ENCODE measurements at regions of chr1 and their contacts with region 1.

Region 1: DNA sequence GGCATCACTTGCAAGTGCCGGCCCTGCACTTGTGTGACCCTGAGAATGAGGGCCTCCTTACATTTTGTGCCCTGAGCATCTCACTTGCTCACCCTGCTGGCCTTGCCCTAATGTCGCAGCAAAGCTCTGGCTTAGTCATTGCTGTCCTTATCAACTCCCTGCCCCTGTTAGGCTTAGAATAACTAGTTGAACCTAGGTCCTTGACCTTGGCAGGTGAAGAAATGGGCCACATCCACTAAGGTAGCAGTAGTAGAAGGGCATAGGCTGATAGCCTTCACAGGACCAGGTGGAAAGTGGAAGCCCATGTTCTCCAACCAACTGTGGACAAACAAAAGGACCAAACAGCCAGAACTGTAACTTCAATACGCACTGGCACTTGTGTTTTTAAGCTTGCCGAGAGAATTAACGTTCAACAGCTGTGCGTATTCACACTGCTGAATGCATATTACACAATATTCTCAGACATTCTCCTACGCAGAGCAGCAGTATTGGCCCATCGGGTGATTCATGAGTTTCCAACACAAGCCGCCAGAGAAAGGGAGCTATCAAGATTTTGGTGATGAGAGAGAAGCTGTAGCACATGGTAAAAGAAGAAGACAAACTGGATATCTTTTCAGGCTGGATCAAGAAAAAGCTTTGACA is 27.7 kb upstream of the PTGFRN start:
- DNase-seq: peak; percentile 44
- CTCF ChIP-seq: peak; percentile 49

Region 2: GRCh38 chr1:116826818-116827606 is 55.0 kb before region 1 on chr1:
- CTCF ChIA-PET with region 1: interaction called, 10 read pairs
- POLR2A ChIA-PET with region 1: no interaction called
- DNase-seq: peak; percentile 80
- CTCF ChIP-seq: no peak

Region 3: DNA sequence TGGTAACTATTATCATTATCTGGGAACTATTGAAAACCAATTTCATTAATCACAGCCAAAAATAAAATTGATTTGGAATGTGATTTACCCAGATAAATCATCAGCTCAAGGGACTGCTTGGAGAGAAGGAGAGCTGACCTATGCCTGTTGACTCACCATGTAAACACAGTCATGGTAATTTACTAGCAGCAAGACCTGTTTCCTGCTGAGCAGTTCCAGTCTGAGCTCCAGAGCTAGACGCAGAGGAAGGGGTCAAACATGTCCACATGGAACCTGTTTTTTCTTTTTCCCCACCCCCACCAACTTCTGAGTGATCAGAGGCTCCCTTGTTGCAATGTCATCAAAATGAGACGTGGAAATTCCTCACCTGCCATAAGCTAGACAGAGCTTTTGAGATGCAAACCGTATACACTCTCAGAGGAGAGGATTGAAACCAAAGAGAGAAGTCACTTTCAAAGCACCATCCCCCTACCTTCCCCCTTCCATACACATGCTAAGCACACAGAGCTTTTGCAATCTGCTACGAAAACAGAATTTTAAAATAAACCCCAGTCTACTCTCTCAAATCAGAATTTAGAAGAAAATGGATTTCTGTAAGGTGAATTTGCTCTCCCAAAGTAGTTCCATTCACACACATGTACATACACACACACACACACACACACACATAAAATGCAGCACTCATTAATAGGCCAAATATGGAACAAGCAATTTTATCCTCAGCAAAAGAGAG is 28.2 kb before region 1 on chr1:
- CTCF ChIA-PET with region 1: interaction called, 12 read pairs
- POLR2A ChIA-PET with region 1: interaction called, 3 read pairs
- DNase-seq: no peak
- CTCF ChIP-seq: no peak

Region 4: GRCh38 chr1:116902032-116902738 is 20.2 kb after region 1 on chr1:
- CTCF ChIA-PET with region 1: interaction called, 16 read pairs
- POLR2A ChIA-PET with region 1: no interaction called
- DNase-seq: no peak
- CTCF ChIP-seq: no peak

Measured in GM10248 (cell line).